MCF 10A (cell line): ENCODE measurements at regions of chr19 and their contacts with region 1.

Region 1: GRCh38 chr19:43595999-43596841 is at the starts of genes IRGQ and ZNF576:
- DNase-seq: peak; percentile 100
- H3K4me3 Mint-ChIP-seq: peak within 1 kb of the TSS; percentile 99
- H3K27ac Mint-ChIP-seq: peak within 1 kb of the TSS; percentile 99
- H3K4me1 Mint-ChIP-seq: peaks cover 24% of the 10 kb centered on the region
- H3K27me3 Mint-ChIP-seq: no peaks in the 10 kb centered on the region
- CTCF ChIP-seq: no peak
- total RNA-seq, gene IRGQ: 21.0 and 26.5 TPM in 2 replicates
- total RNA-seq, gene ZNF576: 13.2 and 18.4 TPM in 2 replicates

Region 2: DNA sequence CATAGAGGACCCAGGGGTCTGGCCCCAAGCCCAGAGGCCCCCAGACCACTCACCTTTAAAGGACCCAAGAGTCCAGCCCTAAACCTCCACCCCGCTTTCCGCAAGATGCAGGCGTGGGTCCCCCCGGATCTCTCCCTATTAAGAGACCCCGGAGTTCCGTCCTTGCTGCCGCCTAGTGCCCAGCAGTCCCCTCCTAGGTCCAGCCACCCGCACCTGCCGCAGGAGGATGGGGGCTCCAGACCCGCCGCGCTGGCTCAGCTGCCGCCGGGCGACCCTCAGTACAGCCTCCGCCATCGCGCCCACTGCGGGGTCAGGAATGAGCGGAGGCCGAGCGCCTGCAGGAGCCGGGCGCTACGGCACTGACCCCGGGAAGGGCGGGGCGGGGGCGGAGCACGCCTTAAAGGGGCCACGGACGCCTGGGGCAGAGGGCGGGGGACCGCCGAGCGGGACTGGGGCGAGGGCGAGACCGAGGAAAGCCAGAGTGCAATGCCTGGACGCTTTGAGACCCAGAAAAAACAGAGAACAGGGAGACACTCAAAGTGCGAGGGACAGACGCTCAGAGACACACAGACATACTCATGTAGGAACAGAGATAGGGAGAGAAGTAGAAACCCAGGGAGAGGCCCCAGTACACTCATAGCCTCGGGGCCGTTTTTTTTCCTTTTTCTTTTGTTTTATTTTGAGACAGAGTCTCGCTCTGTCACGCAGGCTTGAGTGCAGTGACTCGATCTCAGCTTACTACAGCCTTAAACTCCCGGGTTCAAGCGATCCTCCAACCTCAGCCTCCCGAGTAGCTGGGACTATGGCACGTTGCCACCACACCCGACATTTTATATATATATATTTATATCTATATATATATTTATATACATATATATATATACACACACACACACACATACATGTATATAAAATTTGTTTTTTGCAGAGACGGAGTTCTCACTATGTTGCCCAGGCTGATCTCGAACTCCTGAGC is 69.0 kb before region 1 on chr19 and contains the start of gene ETHE1:
- CTCF ChIA-PET with region 1: interaction called, 13 read pairs
- POLR2A ChIA-PET with region 1: interaction called, 75 read pairs
- intact Hi-C with region 1: loop called (anchors 2 kb)
- DNase-seq: peak; percentile 76
- H3K4me3 Mint-ChIP-seq: peak within 1 kb of the TSS; percentile 84
- H3K27ac Mint-ChIP-seq: peak within 1 kb of the TSS; percentile 88
- H3K4me1 Mint-ChIP-seq: peaks cover 26% of the 10 kb centered on the region
- H3K27me3 Mint-ChIP-seq: no peaks in the 10 kb centered on the region
- CTCF ChIP-seq: no peak
- total RNA-seq, gene ETHE1: 78.0 and 94.4 TPM in 2 replicates

Region 3: DNA sequence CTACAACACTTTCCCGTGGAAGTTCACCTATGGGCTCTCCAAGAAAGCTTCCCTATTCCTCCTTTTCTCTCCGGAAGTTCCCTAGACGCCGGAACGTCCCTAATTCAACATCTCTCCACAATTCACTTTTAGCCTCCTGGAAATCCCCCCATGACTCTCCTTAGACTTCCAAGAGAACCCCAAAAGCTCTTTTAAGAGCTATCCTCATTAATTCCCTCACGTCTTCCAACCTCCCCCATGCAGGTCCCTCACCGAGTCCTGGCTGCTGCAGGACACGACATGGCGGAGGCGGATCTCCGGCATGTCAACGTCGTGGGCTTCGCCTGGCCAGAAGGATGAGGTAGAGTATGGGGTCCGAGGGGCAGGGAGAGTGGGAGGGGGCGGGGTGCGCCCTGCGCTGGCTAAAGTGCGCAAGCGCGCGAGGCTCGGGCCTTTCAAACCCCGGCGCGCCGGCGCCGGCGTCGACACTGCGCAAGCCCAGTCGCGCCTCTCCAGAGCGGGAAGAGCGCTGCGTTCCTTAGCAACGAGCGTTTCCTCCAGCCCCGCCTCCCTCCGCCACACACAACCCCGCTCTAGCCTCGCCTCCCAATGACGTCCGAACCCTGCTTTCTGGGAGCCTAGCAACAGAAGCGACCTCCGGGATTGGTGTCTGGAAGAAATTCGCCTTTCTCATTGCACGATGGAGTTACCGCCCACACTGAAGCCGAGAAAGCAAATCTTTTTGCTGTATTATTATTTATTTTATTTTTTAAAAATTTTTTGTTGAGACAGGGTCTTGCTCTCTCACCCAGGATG is 20.9 kb before region 1 on chr19 and contains the starts of genes PINLYP and XRCC1:
- CTCF ChIA-PET with region 1: interaction called, 10 read pairs
- POLR2A ChIA-PET with region 1: interaction called, 55 read pairs
- intact Hi-C with region 1: loop called (anchors 1 kb)
- DNase-seq: peak; percentile 99
- H3K4me3 Mint-ChIP-seq: peak within 1 kb of the TSS; percentile 98
- H3K27ac Mint-ChIP-seq: peak within 1 kb of the TSS; percentile 98
- H3K4me1 Mint-ChIP-seq: peaks cover 12% of the 10 kb centered on the region
- H3K27me3 Mint-ChIP-seq: peaks cover 14% of the 10 kb centered on the region
- CTCF ChIP-seq: no peak
- total RNA-seq, gene PINLYP: 0.74 TPM in 1 of 2 replicates, not detected in the other
- total RNA-seq, gene XRCC1: 18.0 and 20.6 TPM in 2 replicates

Region 4: GRCh38 chr19:43619262-43620060 is 23.2 kb after region 1 on chr19 and contains the start of gene ZNF428:
- CTCF ChIA-PET with region 1: no interaction called
- POLR2A ChIA-PET with region 1: interaction called, 18 read pairs
- intact Hi-C with region 1: no loop called
- DNase-seq: peak; percentile 85
- H3K4me3 Mint-ChIP-seq: peak within 1 kb of the TSS; percentile 89
- H3K27ac Mint-ChIP-seq: peak within 1 kb of the TSS; percentile 78
- H3K4me1 Mint-ChIP-seq: peaks cover 10% of the 10 kb centered on the region
- H3K27me3 Mint-ChIP-seq: no peaks in the 10 kb centered on the region
- CTCF ChIP-seq: no peak
- total RNA-seq, gene ZNF428: 18.6 and 23.3 TPM in 2 replicates

Region 5: GRCh38 chr19:43784981-43785808 is 189.0 kb after region 1 on chr19:
- CTCF ChIA-PET with region 1: no interaction called
- POLR2A ChIA-PET with region 1: interaction called, 6 read pairs
- intact Hi-C with region 1: loop called (anchors 5 kb)
- DNase-seq: peak; percentile 89
- H3K4me3 Mint-ChIP-seq: peak overlapping the region; percentile 86
- H3K27ac Mint-ChIP-seq: peak overlapping the region; percentile 90
- H3K4me1 Mint-ChIP-seq: peaks cover 63% of the 10 kb centered on the region
- H3K27me3 Mint-ChIP-seq: no peaks in the 10 kb centered on the region
- CTCF ChIP-seq: peak; percentile 92